ENCODE measurements at regions of chr10 and their contacts with region 1.

Region 1: DNA sequence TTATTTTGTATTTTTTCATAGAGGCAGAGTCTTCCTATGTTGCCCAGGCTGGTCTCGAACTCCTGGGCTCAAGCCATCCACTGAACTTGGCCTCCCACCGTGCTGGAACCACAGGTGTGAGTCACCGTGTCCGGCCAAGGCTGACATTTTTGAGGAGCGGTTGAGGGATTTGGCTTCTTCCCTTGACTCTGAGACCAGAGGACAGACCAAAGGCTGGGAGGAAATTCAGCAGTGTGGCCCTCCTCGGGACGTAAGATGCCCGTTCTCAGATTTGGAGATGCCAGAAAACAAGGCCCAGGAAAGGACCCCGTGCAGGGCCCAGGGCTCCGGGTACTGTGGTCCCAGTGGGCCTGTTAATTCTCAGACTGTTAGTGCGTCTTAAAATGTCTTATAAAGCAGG is 146.2 kb downstream of the WDR37 start:
- DNase-seq: peak in 1 of 2 experiments; percentile 22
- H3K4me3 ChIP-seq: no peak overlapping the region
- H3K4me3 Mint-ChIP-seq: peak overlapping the region; percentile 55
- H3K27ac Mint-ChIP-seq: peak overlapping the region; percentile 82
- H3K4me1 ChIP-seq: peaks cover 31% of the 10 kb centered on the region
- H3K4me1 Mint-ChIP-seq: peaks cover 18% of the 10 kb centered on the region
- H3K27me3 ChIP-seq: no peaks in the 10 kb centered on the region
- H3K27me3 Mint-ChIP-seq: no peaks in the 10 kb centered on the region
- CTCF ChIP-seq: no peak

Region 2: GRCh38 chr10:1187855-1188557 is 14.3 kb before region 1 on chr10:
- CTCF ChIA-PET with region 1: no interaction called
- POLR2A ChIA-PET with region 1: no interaction called
- intact Hi-C with region 1: loop called (anchors 2 kb)
- DNase-seq: peak in 1 of 2 experiments; percentile 18
- H3K4me3 ChIP-seq: no peak overlapping the region
- H3K4me3 Mint-ChIP-seq: no peak overlapping the region
- H3K27ac Mint-ChIP-seq: no peak overlapping the region
- H3K4me1 ChIP-seq: peaks cover 4% of the 10 kb centered on the region; the same call in 1 of the 2 replicates
- H3K4me1 Mint-ChIP-seq: no peaks in the 10 kb centered on the region
- H3K27me3 ChIP-seq: no peaks in the 10 kb centered on the region
- H3K27me3 Mint-ChIP-seq: no peaks in the 10 kb centered on the region
- CTCF ChIP-seq: no peak

Region 3: GRCh38 chr10:1255118-1255517 is 52.8 kb after region 1 on chr10:
- CTCF ChIA-PET with region 1: no interaction called
- POLR2A ChIA-PET with region 1: no interaction called
- intact Hi-C with region 1: no loop called
- DNase-seq: no peak
- H3K4me3 ChIP-seq: no peak overlapping the region
- H3K4me3 Mint-ChIP-seq: no peak overlapping the region
- H3K27ac Mint-ChIP-seq: no peak overlapping the region
- H3K4me1 ChIP-seq: no peaks in the 10 kb centered on the region
- H3K4me1 Mint-ChIP-seq: no peaks in the 10 kb centered on the region
- H3K27me3 ChIP-seq: peaks cover 5% of the 10 kb centered on the region
- H3K27me3 Mint-ChIP-seq: peaks cover 45% of the 10 kb centered on the region
- CTCF ChIP-seq: no peak